Activated naive CD4-positive, alpha-beta T cell treated with anti-CD3 and anti-CD28 coated beads for 36 hours (primary cell): ENCODE measurements at regions of chr10 and their contacts with region 1.

Region 1: DNA sequence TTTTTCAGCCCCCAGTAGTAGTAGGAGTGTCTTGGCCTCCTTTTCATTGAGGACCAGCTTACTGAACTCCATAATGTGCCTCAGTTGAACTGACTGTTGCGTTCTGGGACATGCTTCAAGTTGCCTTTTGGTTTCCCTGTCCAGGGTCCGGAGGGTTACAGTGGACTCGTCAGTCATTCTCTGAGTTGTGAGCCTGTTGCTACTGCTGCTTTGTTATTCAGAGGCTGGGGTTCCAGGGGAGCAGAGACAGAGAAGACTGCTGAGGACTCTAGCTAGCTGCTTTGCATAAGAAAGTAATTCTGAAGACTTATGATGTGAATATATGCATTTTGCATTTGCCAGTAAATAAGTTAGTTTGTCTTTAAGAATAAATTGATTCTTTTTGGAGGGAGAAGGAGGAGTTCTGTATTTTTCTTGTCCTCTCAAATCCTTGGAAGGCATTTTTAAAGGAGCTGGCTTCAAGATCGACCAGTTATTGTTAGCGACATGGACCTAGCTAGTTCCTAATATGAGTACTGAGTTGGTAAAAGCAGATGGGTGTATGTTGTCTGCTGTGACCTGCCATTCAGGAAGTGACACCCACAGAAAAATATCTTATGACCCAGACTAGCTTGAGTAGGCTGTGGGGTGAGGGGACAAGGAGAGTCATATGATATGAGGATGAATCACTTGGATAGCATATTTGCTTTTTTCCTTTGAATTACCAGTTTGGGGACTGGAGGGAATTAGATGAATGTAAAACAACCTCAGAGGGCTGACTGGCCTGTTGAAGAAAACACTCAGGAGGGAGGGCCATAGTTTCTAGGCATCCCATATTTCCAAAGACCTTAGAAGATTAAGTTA is 8.3 kb downstream of the PI4K2A start:
- DNase-seq: peak; percentile 58
- H3K4me3 Mint-ChIP-seq: no peak overlapping the region
- H3K27ac Mint-ChIP-seq: no peak overlapping the region
- H3K4me1 Mint-ChIP-seq: peaks cover 11% of the 10 kb centered on the region
- H3K27me3 Mint-ChIP-seq: no peaks in the 10 kb centered on the region

Region 2: DNA sequence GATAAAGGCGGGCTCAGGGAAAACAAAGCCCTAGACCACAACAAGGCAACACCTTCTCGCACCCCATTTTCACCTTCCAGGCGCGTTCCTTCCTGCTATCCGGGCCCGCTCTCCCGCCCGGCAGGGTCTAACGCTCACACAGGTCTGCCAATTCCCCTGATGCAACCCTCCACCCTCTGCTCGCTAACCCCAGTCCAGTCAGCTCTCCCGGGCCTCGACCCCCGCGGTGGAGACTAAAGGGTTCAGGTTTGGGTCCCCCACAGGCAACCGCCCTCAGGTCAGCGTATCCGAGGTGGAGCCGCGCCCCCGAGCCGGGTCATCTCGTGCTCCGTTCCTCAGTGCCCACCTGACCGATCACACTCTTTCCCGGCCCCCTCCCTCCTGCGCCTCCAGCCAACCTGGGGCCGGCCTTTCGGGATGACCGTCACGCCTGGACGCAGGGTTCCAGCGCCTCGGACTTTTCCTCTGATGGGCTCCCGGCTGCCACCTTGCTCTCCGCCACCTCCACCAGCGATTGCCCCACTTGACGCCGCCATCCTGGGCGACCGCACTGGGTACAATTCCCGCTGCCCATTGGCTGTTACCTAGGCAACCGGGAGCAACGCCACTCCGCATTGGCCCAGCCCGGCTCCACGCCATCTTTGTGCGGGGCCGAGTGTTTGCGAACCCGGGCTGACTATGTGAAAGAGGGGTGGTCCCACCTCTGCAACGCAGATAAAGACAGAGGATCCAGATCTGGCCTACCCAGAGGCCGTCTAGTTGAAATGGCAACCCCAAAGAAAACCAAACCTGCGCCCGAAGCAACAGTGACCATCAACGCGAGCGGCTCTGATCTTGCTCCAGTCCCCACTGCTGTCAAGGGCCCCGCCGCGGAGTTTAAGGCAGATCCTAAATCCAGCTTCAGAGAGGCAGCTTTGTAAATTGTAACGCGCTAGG is 15.6 kb before region 1 on chr10 and contains the start of gene MORN4:
- CTCF ChIA-PET with region 1: no interaction called
- intact Hi-C with region 1: loop called (anchors 1 kb)
- DNase-seq: peak; percentile 95
- H3K4me3 Mint-ChIP-seq: peak within 1 kb of the TSS; percentile 99
- H3K27ac Mint-ChIP-seq: peak within 1 kb of the TSS; percentile 80
- H3K4me1 Mint-ChIP-seq: peaks cover 14% of the 10 kb centered on the region
- H3K27me3 Mint-ChIP-seq: no peaks in the 10 kb centered on the region
- total RNA-seq, gene MORN4: 10.7 TPM